Right lobe of liver (tissue), 6 donors: ENCODE measurements at regions of chr3 and their contacts with region 1.

Region 1: DNA sequence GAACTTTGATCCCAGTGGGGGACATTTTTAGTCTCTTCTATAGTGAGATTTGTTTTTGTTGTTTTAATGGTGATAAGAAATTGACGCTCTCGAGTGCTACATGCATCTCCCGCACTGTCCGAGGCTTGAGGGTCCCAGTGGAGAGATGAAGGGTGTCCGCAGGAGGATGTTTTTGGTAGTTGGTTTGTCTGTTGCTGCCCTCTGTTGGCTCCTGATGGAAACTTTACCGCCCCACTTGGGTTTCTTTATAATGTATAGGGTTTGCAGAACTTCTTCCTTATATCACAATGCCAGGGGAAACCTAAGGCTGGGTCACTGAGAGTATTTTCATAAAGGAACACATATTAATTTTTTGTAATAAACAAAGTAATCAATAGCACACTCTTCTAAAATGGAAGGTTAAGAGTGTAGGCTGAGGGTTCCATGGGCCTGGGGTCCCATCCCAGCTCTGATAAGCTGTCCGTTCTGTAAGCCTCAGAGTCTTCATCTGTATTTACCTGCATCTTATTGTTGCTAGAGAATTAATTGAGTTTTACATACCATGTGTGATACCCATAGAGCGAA is 185.3 kb upstream of the FEZF2 start:
- DNase-seq: no peak
- ATAC-seq: peak in 2 of 4 donors; percentile 36
- H3K4me3 ChIP-seq: no peak overlapping the region
- H3K27ac ChIP-seq: no peak overlapping the region
- H3K4me1 ChIP-seq: no peaks in the 10 kb centered on the region
- H3K27me3 ChIP-seq: no peaks in the 10 kb centered on the region
- CTCF ChIP-seq: peak; percentile 11 to 52 (median 36)
- POLR2A ChIP-seq: no peak

Region 2: GRCh38 chr3:62343755-62344154 is 214.9 kb before region 1 on chr3:
- intact Hi-C with region 1: loop called in 1 of 2 experiments (anchors 10 kb)
- DNase-seq: no peak
- ATAC-seq: no peak
- H3K4me3 ChIP-seq: no peak overlapping the region
- H3K27ac ChIP-seq: no peak overlapping the region
- H3K4me1 ChIP-seq: no peaks in the 10 kb centered on the region
- H3K27me3 ChIP-seq: no peaks in the 10 kb centered on the region
- CTCF ChIP-seq: no peak
- POLR2A ChIP-seq: no peak